CD4-positive, alpha-beta T cell (primary cell): ENCODE measurements at regions of chr5 and their contacts with region 1.

Region 1: GRCh38 chr5:36079200-36079761 is 12.6 kb upstream of the UGT3A2 start:
- DNase-seq: peak in 5 of 14 experiments; percentile 6 to 56 (median 38)
- ATAC-seq: peak; percentile 59
- H3K4me3 ChIP-seq: no peak overlapping the region
- H3K4me3 Mint-ChIP-seq: no peak overlapping the region
- H3K27ac ChIP-seq: no peak overlapping the region
- H3K27ac Mint-ChIP-seq: no peak overlapping the region
- H3K4me1 ChIP-seq: peaks cover 5% of the 10 kb centered on the region
- H3K4me1 Mint-ChIP-seq: no peaks in the 10 kb centered on the region
- H3K27me3 ChIP-seq: peaks cover 0 to 13% of the 10 kb centered on the region in 2 experiments
- H3K27me3 Mint-ChIP-seq: peaks cover 33% of the 10 kb centered on the region
- CTCF ChIP-seq: peak; percentile 64

Region 2: GRCh38 chr5:36026706-36027465 is 52.4 kb before region 1 on chr5:
- CTCF ChIA-PET with region 1: no interaction called
- POLR2A ChIA-PET with region 1: no interaction called
- intact Hi-C with region 1: loop called in 1 of 2 experiments (anchors 2 kb)
- DNase-seq: no peak
- ATAC-seq: no peak
- H3K4me3 ChIP-seq: no peak overlapping the region
- H3K4me3 Mint-ChIP-seq: no peak overlapping the region
- H3K27ac ChIP-seq: no peak overlapping the region
- H3K27ac Mint-ChIP-seq: no peak overlapping the region
- H3K4me1 ChIP-seq: no peaks in the 10 kb centered on the region
- H3K4me1 Mint-ChIP-seq: no peaks in the 10 kb centered on the region
- H3K27me3 ChIP-seq: no peaks in the 10 kb centered on the region
- H3K27me3 Mint-ChIP-seq: peaks cover 25% of the 10 kb centered on the region
- CTCF ChIP-seq: no peak

Region 3: DNA sequence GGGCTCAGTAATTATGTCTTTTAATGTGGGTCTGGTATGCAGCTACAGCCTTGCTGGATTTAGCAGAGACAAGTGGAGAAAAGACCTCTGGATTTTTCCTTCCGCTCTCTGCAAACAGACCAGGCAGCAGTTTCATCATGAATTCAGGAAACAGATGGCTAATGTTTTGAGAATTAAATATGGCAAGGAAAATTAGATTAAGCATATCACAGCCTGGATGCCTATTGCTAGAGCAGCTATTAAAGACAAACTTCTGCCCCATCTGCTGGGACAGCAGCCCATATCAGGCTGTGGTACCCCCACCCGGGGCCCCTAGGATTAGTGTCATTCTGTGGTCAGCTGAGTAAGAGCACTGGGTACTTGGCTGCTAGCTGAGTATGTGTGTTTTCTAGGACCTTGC is 78.9 kb after region 1 on chr5:
- CTCF ChIA-PET with region 1: no interaction called
- POLR2A ChIA-PET with region 1: no interaction called
- intact Hi-C with region 1: no loop called
- DNase-seq: no peak
- ATAC-seq: no peak
- H3K4me3 ChIP-seq: no peak overlapping the region
- H3K4me3 Mint-ChIP-seq: no peak overlapping the region
- H3K27ac ChIP-seq: no peak overlapping the region
- H3K27ac Mint-ChIP-seq: no peak overlapping the region
- H3K4me1 ChIP-seq: peaks cover 11% of the 10 kb centered on the region
- H3K4me1 Mint-ChIP-seq: peaks cover 41% of the 10 kb centered on the region
- H3K27me3 ChIP-seq: no peaks in the 10 kb centered on the region
- H3K27me3 Mint-ChIP-seq: no peaks in the 10 kb centered on the region
- CTCF ChIP-seq: no peak

Region 4: GRCh38 chr5:36305571-36306326 is 226.5 kb after region 1 on chr5:
- CTCF ChIA-PET with region 1: no interaction called
- POLR2A ChIA-PET with region 1: no interaction called
- intact Hi-C with region 1: loop called (anchors 2 to 5 kb)
- DNase-seq: peak in 5 of 14 experiments; percentile 4 to 34 (median 13)
- ATAC-seq: no peak
- H3K4me3 ChIP-seq: no peak overlapping the region
- H3K4me3 Mint-ChIP-seq: no peak overlapping the region
- H3K27ac ChIP-seq: no peak overlapping the region
- H3K27ac Mint-ChIP-seq: no peak overlapping the region
- H3K4me1 ChIP-seq: no peaks in the 10 kb centered on the region
- H3K4me1 Mint-ChIP-seq: peaks cover 12% of the 10 kb centered on the region
- H3K27me3 ChIP-seq: no peaks in the 10 kb centered on the region
- H3K27me3 Mint-ChIP-seq: peaks cover 7% of the 10 kb centered on the region
- CTCF ChIP-seq: no peak

Region 5: DNA sequence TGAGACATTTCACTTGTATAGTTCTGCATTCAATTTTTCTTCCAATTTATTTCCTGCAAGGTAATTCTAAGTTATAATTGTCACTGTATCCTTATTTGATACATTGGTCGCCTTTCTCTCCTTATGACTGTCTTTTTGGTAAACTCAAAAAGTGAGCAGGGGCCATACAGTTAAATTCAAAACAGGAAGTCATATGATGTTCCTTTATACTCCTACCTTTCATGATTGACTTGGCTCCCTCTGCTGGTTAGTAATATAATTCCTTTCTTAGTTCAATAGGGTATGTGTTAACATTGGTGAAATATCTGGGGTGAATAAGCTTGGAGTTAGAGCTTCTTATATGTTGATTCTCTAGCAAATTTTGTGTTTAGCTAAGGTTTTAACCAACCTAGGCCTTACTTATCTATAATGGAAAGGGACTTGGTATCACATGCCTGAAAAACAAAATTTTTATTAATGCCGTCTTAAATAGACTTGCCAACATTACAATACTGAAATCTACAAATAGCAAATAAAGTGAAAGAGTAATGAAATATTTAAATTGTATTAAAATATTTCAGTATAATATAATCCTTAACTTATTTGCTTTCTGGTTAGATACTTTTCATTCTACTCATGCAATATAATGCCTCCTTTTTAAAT is 791.2 kb after region 1 on chr5:
- CTCF ChIA-PET with region 1: no interaction called
- POLR2A ChIA-PET with region 1: no interaction called
- intact Hi-C with region 1: no loop called
- DNase-seq: peak in 3 of 14 experiments; percentile 81 to 83 (median 81)
- ATAC-seq: peak; percentile 73
- H3K4me3 ChIP-seq: no peak overlapping the region
- H3K4me3 Mint-ChIP-seq: peak overlapping the region; percentile 2
- H3K27ac ChIP-seq: no peak overlapping the region
- H3K27ac Mint-ChIP-seq: peak overlapping the region; percentile 21
- H3K4me1 ChIP-seq: peaks cover 11% of the 10 kb centered on the region
- H3K4me1 Mint-ChIP-seq: peaks cover 53% of the 10 kb centered on the region
- H3K27me3 ChIP-seq: no peaks in the 10 kb centered on the region
- H3K27me3 Mint-ChIP-seq: no peaks in the 10 kb centered on the region
- CTCF ChIP-seq: peak; percentile 72